Heart right ventricle (tissue), 16 donors: ENCODE measurements at regions of chr10 and their contacts with region 1.

Region 1: GRCh38 chr10:22003079-22003913 is at the start of gene DNAJC1:
- DNase-seq: peak; percentile 98 to 99
- ATAC-seq: peak; percentile 99 to 100 (median 100)
- H3K4me3 ChIP-seq: peak within 1 kb of the TSS; percentile 52 to 94 (median 80)
- H3K27ac ChIP-seq: peak within 1 kb of the TSS; percentile 72 to 98 (median 94)
- H3K4me1 ChIP-seq: peaks cover 0 to 28% (median 16%) of the 10 kb centered on the region in 9 donors
- H3K27me3 ChIP-seq: no peaks in the 10 kb centered on the region
- CTCF ChIP-seq: peak in 4 of 9 donors; percentile 5 to 21 (median 11)
- total RNA-seq, gene DNAJC1: 8.9 to 18.1 (median 11.4) TPM

Region 2: GRCh38 chr10:22316285-22317120 is 313.2 kb after region 1 on chr10 and contains the start of gene COMMD3:
- intact Hi-C with region 1: loop called in 6 of 10 experiments (anchors 5 to 10 kb)
- DNase-seq: peak; percentile 89 to 91
- ATAC-seq: peak; percentile 91 to 96 (median 93)
- H3K4me3 ChIP-seq: peak within 1 kb of the TSS; percentile 83 to 96 (median 90)
- H3K27ac ChIP-seq: peak within 1 kb of the TSS; percentile 85 to 96 (median 94)
- H3K4me1 ChIP-seq: peaks cover 0 to 44% (median 35%) of the 10 kb centered on the region in 9 donors
- H3K27me3 ChIP-seq: no peaks in the 10 kb centered on the region
- CTCF ChIP-seq: no peak
- total RNA-seq, gene COMMD3: 72.7 to 95.0 (median 80.6) TPM

Region 3: DNA sequence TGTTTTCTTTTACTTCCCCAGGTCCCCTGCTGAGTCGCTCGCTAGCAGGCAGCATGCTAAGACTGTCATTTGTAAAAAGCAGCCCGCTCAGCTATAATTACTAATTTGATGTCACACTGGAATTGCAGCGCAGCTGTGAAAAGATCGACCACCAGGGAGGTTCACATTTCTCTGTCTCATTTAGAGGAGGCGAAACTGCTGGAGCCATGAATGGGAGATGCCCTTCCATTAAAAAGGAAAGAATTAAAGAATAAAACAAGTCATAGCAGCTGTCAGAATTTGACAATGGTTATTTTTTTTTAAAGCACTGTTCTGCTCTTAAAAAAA is 557.6 kb after region 1 on chr10:
- intact Hi-C with region 1: loop called in 2 of 10 experiments (anchors 10 kb)
- DNase-seq: no peak
- ATAC-seq: no peak
- H3K4me3 ChIP-seq: no peak overlapping the region
- H3K27ac ChIP-seq: no peak overlapping the region
- H3K4me1 ChIP-seq: no peaks in the 10 kb centered on the region
- H3K27me3 ChIP-seq: no peaks in the 10 kb centered on the region
- CTCF ChIP-seq: no peak